ENCODE measurements at regions of chr12 and their contacts with region 1.

Region 1: DNA sequence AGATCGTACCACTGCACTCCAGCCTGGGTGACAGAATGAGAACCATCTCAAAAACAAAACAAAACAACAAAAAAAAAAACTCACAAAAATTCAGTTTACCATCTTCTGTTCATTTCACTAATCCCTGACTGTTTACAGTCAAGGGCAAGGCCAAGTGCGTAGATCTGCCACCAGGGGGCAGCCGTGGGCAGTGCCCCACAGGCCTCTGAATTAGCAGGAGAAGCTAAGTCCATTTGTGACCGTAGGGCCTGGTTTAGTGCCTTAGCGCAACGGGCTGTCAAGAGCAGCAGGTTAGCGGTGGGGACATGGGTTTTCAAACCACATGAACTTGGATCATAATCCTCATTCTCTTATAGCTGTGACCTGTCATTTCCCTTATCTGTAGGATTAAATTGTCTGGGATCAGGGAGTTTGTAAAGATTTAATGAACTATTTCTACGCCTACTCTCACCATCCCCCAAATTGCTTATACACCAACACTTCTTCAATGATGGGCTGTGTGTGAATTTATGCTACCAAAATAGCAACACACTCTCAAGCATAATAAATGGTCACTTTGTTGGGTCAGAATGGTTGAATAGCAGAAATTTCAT is 49.0 kb downstream of the KCTD10 start:
- DNase-seq: peak; percentile 81 to 91
- H3K4me3 ChIP-seq: no peak overlapping the region
- H3K27ac ChIP-seq: no peak overlapping the region
- H3K4me1 ChIP-seq: peaks cover 0 to 13% (median 6%) of the 10 kb centered on the region in 4 donors
- H3K27me3 ChIP-seq: peaks cover 0 to 5% (median 0%) of the 10 kb centered on the region in 3 donors
- CTCF ChIP-seq: peak in 6 of 7 experiments; percentile 19 to 93 (median 86)
- EP300 ChIP-seq: no peak
- POLR2A ChIP-seq: no peak

Region 2: GRCh38 chr12:109488051-109488665 is 60.0 kb after region 1 on chr12:
- intact Hi-C with region 1: loop called (anchors 10 kb)
- DNase-seq: no peak
- H3K4me3 ChIP-seq: no peak overlapping the region
- H3K27ac ChIP-seq: no peak overlapping the region
- H3K4me1 ChIP-seq: no peaks in the 10 kb centered on the region
- H3K27me3 ChIP-seq: no peaks in the 10 kb centered on the region
- CTCF ChIP-seq: no peak
- EP300 ChIP-seq: no peak
- POLR2A ChIP-seq: no peak

Measured in stomach (tissue), 19 donors.